Left colon (tissue), 2 donors: ENCODE measurements at regions of chr1 and their contacts with region 1.

Region 1: GRCh38 chr1:12402159-12402673 is 172.4 kb downstream of the VPS13D start:
- DNase-seq: no peak
- ATAC-seq: no peak

Region 2: GRCh38 chr1:12387641-12388040 is 14.6 kb before region 1 on chr1:
- intact Hi-C with region 1: loop called in 1 of 2 experiments (anchors 1 kb)
- DNase-seq: no peak
- ATAC-seq: no peak